Motor neuron (in vitro differentiated cells): ENCODE measurements at regions of chr10 and their contacts with region 1.

Region 1: GRCh38 chr10:23314835-23315239 is 29.8 kb downstream of the C10orf67 start:
- ATAC-seq: peak in 5 of 8 experiments; percentile 21 to 80 (median 60)
- H3K4me3 ChIP-seq: no peak overlapping the region
- H3K27ac ChIP-seq: no peak overlapping the region
- H3K4me1 ChIP-seq: no peaks in the 10 kb centered on the region

Region 2: DNA sequence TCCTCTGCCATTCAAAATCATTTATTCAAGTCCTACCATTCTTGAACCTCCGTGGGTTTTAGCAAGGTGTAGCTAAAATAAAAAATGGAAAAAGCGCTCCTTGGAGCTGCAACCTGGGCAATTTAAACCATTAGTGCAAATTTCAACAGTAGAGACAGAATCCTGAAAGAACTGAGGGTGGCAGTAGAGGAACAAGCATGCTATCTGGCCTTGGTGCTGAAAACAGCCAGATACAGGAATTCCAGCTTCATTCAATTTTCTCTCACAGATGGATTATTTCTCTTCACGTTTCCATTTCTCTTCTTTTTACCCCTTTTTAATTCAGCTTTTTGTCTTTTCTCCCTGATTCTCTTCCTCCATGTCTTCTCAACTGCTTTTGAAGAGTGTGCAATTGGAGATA is 201.7 kb after region 1 on chr10:
- in situ Hi-C with region 1: loop called in 2 of 9 experiments (anchors 10 to 25 kb)
- ATAC-seq: peak in 6 of 8 experiments; percentile 50 to 69 (median 64)
- H3K4me3 ChIP-seq: no peak overlapping the region
- H3K27ac ChIP-seq: no peak overlapping the region
- H3K4me1 ChIP-seq: peaks cover 0 to 7% of the 10 kb centered on the region in 2 donors

Region 3: GRCh38 chr10:23525406-23525805 is 210.6 kb after region 1 on chr10:
- in situ Hi-C with region 1: loop called in 3 of 9 experiments (anchors 10 to 25 kb)
- ATAC-seq: peak in 2 of 8 experiments; percentile 36 to 37
- H3K4me3 ChIP-seq: no peak overlapping the region
- H3K27ac ChIP-seq: no peak overlapping the region
- H3K4me1 ChIP-seq: peaks cover 0 to 3% of the 10 kb centered on the region in 2 donors

Region 4: DNA sequence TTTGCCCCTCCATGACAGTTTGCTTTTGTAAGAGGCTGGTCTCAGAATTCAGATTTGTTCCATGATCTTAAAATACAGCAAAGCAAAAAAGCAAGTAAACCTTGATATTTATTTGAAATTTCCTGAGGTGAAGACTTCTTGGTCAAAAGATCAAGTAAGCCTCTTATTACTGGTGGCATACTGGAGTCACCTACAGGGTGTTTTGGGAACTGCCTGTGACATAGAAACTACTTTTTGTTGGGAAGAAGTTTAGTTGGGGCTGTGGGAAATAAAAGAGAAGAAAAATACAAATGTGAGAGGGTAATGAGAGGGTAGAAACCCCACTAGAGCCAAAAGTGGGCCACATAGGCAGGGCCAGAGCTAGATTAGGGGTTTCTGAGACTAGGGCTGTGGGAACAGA is 341.9 kb after region 1 on chr10:
- in situ Hi-C with region 1: loop called in 1 of 9 experiments (anchors 25 kb)
- ATAC-seq: peak in 2 of 8 experiments; percentile 39 to 46
- H3K4me3 ChIP-seq: no peak overlapping the region
- H3K27ac ChIP-seq: no peak overlapping the region
- H3K4me1 ChIP-seq: no peaks in the 10 kb centered on the region

Region 5: GRCh38 chr10:23694446-23694920 is 379.6 kb after region 1 on chr10:
- in situ Hi-C with region 1: loop called in 2 of 9 experiments (anchors 25 kb)
- ATAC-seq: peak; percentile 13 to 96 (median 94)
- H3K4me3 ChIP-seq: peak overlapping the region; percentile 44 to 75 (median 45)
- H3K27ac ChIP-seq: no peak overlapping the region
- H3K4me1 ChIP-seq: peaks cover 4 to 11% of the 10 kb centered on the region in 2 donors